ENCODE measurements at regions of chr3 and their contacts with region 1.

Region 1: DNA sequence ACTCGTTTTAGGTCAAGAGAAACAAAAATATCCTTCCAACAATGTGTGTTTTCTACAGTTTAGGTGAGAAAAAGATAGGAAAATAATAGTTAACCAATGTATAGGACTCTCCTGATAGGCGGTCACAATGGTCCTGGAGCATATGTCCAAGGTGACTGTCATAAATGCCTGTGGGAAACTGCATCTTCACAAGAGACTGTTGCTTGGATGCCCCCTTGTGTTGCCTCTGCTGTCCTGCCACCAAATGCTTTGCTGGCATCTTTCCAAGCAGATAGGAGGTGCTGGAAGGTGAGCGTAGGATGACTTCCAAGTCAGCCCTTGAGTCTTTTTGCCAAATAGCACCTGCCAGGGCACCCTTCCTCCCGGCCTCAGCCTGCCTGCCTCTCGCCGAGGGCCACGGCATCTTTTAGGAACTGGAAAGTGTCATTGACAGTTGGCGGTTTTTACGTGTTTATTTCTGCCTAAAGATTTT is 24.1 kb upstream of the SACM1L start:
- DNase-seq: peak; percentile 74
- ATAC-seq: no peak
- H3K4me3 ChIP-seq: no peak overlapping the region
- H3K27ac ChIP-seq: no peak overlapping the region
- H3K4me1 ChIP-seq: peaks cover 44% of the 10 kb centered on the region
- H3K27me3 ChIP-seq: no peaks in the 10 kb centered on the region
- CTCF ChIP-seq: peak; percentile 80

Region 2: GRCh38 chr3:45218578-45219390 is 446.4 kb before region 1 on chr3:
- CTCF ChIA-PET with region 1: no interaction called
- POLR2A ChIA-PET with region 1: interaction called, 3 read pairs
- intact Hi-C with region 1: loop called (anchors 5 kb)
- DNase-seq: peak; percentile 86
- ATAC-seq: peak; percentile 77
- H3K4me3 ChIP-seq: peak overlapping the region; percentile 27
- H3K27ac ChIP-seq: peak overlapping the region; percentile 75
- H3K4me1 ChIP-seq: peaks cover 33% of the 10 kb centered on the region
- H3K27me3 ChIP-seq: no peaks in the 10 kb centered on the region
- CTCF ChIP-seq: no peak

Region 3: DNA sequence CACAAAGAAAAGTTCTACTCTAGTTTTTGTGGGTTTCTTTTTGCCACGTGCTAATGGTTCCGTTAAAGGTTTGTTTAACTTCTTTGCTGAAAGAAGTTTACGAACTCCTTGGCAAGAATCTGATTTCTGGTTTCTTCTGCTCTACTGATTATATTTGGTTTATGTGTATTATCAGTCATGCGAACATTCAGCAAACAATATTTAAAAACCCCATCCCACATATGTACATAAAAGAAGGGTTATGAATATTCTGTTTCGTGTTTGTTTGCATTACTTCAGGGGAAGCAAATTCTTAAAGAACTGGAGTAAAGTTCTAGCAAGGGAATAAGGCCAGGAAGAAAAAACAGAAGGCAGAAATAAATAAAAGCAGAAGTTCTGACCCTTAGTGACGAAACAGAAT is 267.0 kb before region 1 on chr3:
- CTCF ChIA-PET with region 1: no interaction called
- POLR2A ChIA-PET with region 1: no interaction called
- intact Hi-C with region 1: loop called (anchors 5 kb)
- DNase-seq: peak; percentile 82
- ATAC-seq: peak; percentile 96
- H3K4me3 ChIP-seq: peak overlapping the region; percentile 16; the same call in 1 of the 2 replicates
- H3K27ac ChIP-seq: peak overlapping the region; percentile 70
- H3K4me1 ChIP-seq: peaks cover 16% of the 10 kb centered on the region
- H3K27me3 ChIP-seq: no peaks in the 10 kb centered on the region
- CTCF ChIP-seq: no peak

Region 4: GRCh38 chr3:45688882-45689756 is 24.0 kb after region 1 on chr3 and contains the start of gene SACM1L:
- CTCF ChIA-PET with region 1: interaction called, 4 read pairs
- POLR2A ChIA-PET with region 1: no interaction called
- intact Hi-C with region 1: loop called (anchors 1 kb)
- DNase-seq: peak; percentile 99
- ATAC-seq: peak; percentile 82
- H3K4me3 ChIP-seq: peak within 1 kb of the TSS; percentile 95
- H3K27ac ChIP-seq: peak within 1 kb of the TSS; percentile 68
- H3K4me1 ChIP-seq: peaks cover 11% of the 10 kb centered on the region
- H3K27me3 ChIP-seq: no peaks in the 10 kb centered on the region
- CTCF ChIP-seq: no peak
- total RNA-seq, gene SACM1L: 30.1 and 46.7 TPM in 2 replicates

Measured in PC-3 (cell line).